ENCODE measurements at regions of chr17 and their contacts with region 1.

Region 1: GRCh38 chr17:21511363-21512198 is 135.4 kb downstream of the KCNJ12 start:
- DNase-seq: peak; percentile 72
- ATAC-seq: peak; percentile 87
- H3K4me3 Mint-ChIP-seq: peak overlapping the region; percentile 38
- H3K27ac Mint-ChIP-seq: no peak overlapping the region
- H3K4me1 Mint-ChIP-seq: peaks cover 20% of the 10 kb centered on the region
- H3K27me3 Mint-ChIP-seq: peaks cover 46% of the 10 kb centered on the region

Region 2: DNA sequence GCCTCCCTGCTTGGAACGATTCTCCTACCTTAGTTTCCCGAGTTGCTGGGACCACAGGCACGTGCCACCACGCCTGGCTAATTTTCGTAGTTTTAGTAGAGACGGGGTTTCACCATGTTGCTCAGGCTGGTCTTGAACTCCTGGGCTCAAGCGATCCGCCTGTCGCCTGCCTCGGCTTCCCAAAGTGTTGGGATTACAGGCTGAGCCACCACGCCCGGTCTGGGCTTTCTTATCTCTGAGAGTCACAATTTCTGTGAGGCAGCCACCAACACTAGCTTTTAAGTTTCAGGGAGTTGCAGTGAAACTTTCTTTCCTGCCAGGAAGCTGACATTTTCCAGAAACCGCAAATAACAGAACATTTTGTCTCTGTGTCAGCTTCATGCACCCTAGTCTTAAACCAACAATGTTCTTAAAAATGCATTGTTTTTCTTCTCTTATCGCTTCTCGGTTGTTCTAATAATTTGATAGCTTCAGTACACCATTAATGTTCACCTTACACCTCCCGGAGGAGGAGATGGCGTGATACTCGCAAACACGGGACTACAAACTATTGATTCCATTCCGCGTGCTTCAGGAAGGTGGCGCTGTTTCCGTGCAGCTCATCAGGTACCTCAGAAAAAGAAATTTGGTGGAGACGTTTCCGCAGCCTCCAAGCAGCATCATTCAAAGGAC is 392.2 kb before region 1 on chr17:
- CTCF ChIA-PET with region 1: interaction called, 44 read pairs
- DNase-seq: peak; percentile 77
- ATAC-seq: peak; percentile 88
- H3K4me3 Mint-ChIP-seq: peak overlapping the region; percentile 3
- H3K27ac Mint-ChIP-seq: no peak overlapping the region
- H3K4me1 Mint-ChIP-seq: peaks cover 8% of the 10 kb centered on the region
- H3K27me3 Mint-ChIP-seq: peaks cover 10% of the 10 kb centered on the region

Region 3: DNA sequence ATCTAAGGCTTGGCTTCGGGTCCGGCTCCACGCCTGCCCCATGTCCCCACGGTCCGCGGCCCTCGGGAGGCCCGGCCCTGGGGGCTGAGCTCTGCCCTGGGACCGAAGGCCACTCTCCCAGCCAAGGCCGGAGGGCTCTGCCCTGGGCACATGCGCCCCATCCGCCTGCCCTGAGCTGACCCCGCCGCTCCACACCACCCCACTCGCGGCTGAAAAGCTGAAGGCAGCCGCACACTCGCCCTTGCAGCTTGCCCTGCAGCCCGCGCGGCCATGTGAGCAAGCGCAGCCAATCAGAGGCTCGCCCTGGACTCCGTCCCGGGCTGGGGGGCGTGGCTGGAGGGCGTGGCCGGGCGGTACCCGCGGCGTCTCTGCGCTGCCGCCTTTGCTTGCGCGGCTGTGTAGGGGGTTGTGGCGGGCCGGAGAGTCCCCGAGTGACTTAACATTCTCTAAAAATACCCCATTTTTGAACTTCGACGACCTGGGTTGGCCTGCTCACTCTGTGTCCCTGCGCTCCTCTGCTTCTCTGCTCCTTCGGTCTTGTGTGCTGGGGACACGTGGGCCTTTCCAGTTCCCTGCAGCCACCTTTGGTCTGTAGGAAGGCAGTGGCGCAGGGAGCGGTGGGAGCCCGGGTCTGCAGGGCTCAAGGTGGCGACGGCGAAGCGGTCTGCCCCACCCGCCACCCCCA is 235.9 kb before region 1 on chr17:
- CTCF ChIA-PET with region 1: interaction called, 25 read pairs
- DNase-seq: peak; percentile 95
- ATAC-seq: peak; percentile 93
- H3K4me3 Mint-ChIP-seq: peak overlapping the region; percentile 67
- H3K27ac Mint-ChIP-seq: peak overlapping the region; percentile 65
- H3K4me1 Mint-ChIP-seq: peaks cover 35% of the 10 kb centered on the region
- H3K27me3 Mint-ChIP-seq: no peaks in the 10 kb centered on the region

Region 4: GRCh38 chr17:21457051-21458026 is 54.2 kb before region 1 on chr17:
- CTCF ChIA-PET with region 1: interaction called, 109 read pairs
- DNase-seq: peak; percentile 92
- ATAC-seq: peak; percentile 95
- H3K4me3 Mint-ChIP-seq: no peak overlapping the region
- H3K27ac Mint-ChIP-seq: no peak overlapping the region
- H3K4me1 Mint-ChIP-seq: peaks cover 18% of the 10 kb centered on the region
- H3K27me3 Mint-ChIP-seq: peaks cover 17% of the 10 kb centered on the region

Region 5: GRCh38 chr17:21613071-21613429 is 101.5 kb after region 1 on chr17:
- CTCF ChIA-PET with region 1: no interaction called
- DNase-seq: no peak
- ATAC-seq: no peak
- H3K4me3 Mint-ChIP-seq: no peak overlapping the region
- H3K27ac Mint-ChIP-seq: no peak overlapping the region
- H3K4me1 Mint-ChIP-seq: no peaks in the 10 kb centered on the region
- H3K27me3 Mint-ChIP-seq: no peaks in the 10 kb centered on the region

Measured in activated CD8-positive, alpha-beta memory T cell treated with anti-CD3 and anti-CD28 coated beads, Interleukin-2, amount 10 ng/mL, durations not matched to agents 7 days and 5 days (primary cell).